ENCODE measurements at regions of chrX and their contacts with region 1.

Region 1: GRCh38 chrX:54675762-54676161 is 122.3 kb downstream of the ITIH6 start:
- DNase-seq: no peak
- ATAC-seq: no peak
- H3K4me3 ChIP-seq: no peak overlapping the region
- H3K27ac ChIP-seq: no peak overlapping the region
- H3K4me1 ChIP-seq: no peaks in the 10 kb centered on the region
- H3K27me3 ChIP-seq: no peaks in the 10 kb centered on the region
- CTCF ChIP-seq: no peak

Region 2: DNA sequence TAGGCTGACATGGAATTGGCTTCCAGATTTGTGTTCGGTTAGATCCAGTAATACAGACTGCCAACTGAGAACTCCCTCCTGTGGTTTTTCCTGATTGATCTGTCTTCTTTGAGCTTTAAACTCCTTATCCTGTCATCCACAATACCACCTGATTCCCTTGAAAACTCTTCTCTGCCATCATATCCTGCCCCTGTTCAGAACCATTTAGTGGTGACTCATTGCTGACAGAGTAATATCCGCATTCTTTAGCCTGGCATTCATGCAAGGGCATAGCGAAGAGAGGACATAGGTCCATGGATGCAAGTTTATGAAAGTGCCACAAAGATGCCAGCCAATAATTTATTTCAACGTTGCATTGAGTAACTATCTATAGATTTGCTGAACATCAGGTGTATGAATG is 45.7 kb after region 1 on chrX:
- intact Hi-C with region 1: no loop called
- DNase-seq: no peak
- ATAC-seq: no peak
- H3K4me3 ChIP-seq: no peak overlapping the region
- H3K27ac ChIP-seq: no peak overlapping the region
- H3K4me1 ChIP-seq: no peaks in the 10 kb centered on the region
- H3K27me3 ChIP-seq: peaks cover 0 to 14% (median 0%) of the 10 kb centered on the region in 7 donors
- CTCF ChIP-seq: no peak

Region 3: DNA sequence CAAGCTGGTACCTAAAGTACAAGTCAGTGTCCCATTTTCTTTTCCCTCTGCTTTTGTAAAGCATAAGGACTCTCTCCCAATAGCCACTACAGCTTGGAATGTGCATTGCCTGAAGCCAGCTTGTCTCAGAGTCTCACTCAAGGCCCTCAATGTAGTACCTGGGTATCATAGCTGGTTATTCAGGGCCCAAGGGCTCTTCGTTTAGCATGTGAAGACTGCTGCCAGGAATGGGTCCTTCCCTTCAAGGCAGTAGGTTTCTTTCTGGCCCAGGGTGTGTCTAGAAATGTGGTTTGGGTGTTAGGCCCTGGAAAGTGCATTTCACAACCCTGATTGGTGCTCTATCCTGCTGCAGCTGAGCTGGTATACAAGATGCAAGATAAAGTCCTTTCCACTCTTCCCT is 163.5 kb after region 1 on chrX:
- intact Hi-C with region 1: loop called in 1 of 10 experiments (anchors 5 kb)
- DNase-seq: no peak
- ATAC-seq: no peak
- H3K4me3 ChIP-seq: no peak overlapping the region
- H3K27ac ChIP-seq: no peak overlapping the region
- H3K4me1 ChIP-seq: no peaks in the 10 kb centered on the region
- H3K27me3 ChIP-seq: peaks cover 0 to 28% (median 0%) of the 10 kb centered on the region in 7 donors
- CTCF ChIP-seq: no peak

Region 4: DNA sequence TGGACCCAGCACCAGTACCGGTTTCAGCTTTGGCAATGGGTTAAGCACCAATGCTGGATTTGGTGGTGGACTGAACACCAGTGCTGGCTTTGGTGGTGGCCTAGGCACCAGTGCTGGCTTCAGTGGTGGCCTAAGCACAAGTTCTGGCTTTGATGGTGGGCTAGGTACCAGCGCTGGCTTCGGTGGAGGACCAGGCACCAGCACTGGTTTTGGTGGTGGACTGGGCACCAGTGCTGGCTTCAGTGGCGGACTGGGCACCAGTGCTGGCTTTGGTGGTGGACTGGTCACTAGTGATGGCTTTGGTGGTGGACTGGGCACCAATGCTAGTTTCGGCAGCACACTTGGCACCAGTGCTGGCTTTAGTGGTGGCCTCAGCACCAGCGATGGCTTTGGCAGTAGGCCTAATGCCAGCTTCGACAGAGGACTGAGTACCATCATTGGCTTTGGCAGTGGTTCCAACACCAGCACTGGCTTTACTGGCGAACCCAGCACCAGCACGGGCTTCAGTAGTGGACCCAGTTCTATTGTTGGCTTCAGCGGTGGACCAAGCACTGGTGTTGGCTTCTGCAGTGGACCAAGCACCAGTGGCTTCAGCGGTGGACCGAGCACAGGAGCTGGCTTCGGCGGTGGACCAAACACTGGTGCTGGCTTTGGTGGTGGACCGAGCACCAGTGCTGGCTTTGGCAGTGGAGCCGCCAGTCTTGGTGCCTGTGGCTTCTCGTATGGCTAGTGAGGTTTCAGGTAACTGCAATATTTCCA is 254.7 kb after region 1 on chrX:
- intact Hi-C with region 1: no loop called
- DNase-seq: no peak
- ATAC-seq: no peak
- H3K4me3 ChIP-seq: no peak overlapping the region
- H3K27ac ChIP-seq: no peak overlapping the region
- H3K4me1 ChIP-seq: no peaks in the 10 kb centered on the region
- H3K27me3 ChIP-seq: no peaks in the 10 kb centered on the region
- CTCF ChIP-seq: no peak

Measured in heart right ventricle (tissue), 16 donors.